T-cell (primary cell): ENCODE measurements at regions of chr12 and their contacts with region 1.

Region 1: DNA sequence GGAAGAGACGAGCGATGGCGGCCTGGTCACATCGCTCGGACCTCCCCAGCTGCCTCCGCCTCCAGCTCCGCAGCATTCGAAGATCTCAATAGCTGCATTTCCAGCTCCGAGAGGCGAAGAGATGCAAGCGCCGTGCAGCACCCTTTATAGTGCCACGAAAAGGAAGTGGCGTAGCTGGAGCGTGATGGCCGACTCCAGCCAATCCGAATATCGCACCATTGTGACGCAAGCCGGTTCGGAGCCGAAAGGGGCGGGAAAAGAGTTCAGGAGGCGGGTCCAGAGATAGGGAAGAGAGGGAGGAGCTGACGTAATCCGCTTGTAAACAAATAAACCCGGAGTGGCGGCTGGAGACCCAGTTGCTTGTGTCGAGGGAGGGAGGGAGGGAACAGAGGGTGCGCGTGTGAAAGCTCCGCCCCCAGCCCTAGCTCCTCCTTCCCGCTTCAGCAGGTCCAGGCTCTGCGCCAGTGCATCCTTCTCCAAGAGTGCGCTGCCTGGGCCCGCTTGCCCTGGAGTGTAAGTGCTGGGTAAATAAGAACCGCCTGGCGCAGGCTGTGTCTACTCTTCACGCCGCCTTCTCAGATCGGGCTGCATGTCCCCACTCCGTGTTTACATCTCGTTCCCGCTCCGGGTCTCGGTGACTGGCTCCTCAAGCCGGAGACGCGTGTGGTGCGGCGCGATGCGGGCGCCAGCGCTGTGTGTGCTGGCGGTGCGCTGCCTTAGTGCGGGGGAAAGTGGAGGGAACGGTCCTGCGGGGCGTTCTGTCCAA is at the start of gene BTG1:
- DNase-seq: peak; percentile 95 to 100 (median 99)
- ATAC-seq: peak; percentile 76 to 83 (median 80)
- H3K4me3 ChIP-seq: peak within 1 kb of the TSS; percentile 77 to 98
- H3K4me3 Mint-ChIP-seq: peak within 1 kb of the TSS; percentile 100
- H3K27ac ChIP-seq: peak within 1 kb of the TSS; percentile 94
- H3K27ac Mint-ChIP-seq: peak within 1 kb of the TSS; percentile 99 to 100
- H3K4me1 ChIP-seq: peaks cover 10% of the 10 kb centered on the region in 2 experiments
- H3K4me1 Mint-ChIP-seq: peaks cover 27 to 51% (median 32%) of the 10 kb centered on the region in 3 donors
- H3K27me3 ChIP-seq: no peaks in the 10 kb centered on the region
- H3K27me3 Mint-ChIP-seq: no peaks in the 10 kb centered on the region
- total RNA-seq, gene BTG1: 484 to 1,238 (median 551) TPM

Region 2: DNA sequence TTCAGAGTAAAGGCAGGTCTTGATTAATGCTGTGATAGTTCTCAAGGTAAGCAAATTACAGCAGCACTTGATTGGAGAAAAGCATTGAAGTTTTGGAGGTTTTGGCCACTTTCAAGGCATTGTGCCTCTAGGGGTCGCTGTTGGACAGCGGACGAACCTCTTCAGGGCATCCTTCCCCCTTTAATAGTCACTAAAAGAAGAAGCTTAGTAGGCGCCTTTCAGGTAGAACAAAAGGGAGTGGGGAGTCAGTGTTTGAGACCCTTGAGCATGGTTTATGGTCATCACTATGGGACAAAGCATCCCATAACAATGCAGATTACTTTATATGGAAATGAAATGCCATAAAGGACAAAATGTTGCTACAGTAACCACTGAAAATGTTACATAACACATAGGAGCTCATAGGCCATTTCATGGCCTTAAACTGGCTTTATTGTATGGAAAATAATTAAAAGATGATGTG is 763.8 kb before region 1 on chr12:
- CTCF ChIA-PET with region 1: interaction called, 4 to 20 read pairs
- POLR2A ChIA-PET with region 1: interaction called in 1 of 2 experiments, 13 read pairs
- DNase-seq: peak; percentile 61 to 92 (median 80)
- ATAC-seq: peak; percentile 84 to 89 (median 87)
- H3K4me3 ChIP-seq: peak overlapping the region in 1 of 2 donors; percentile 67
- H3K4me3 Mint-ChIP-seq: peak overlapping the region; percentile 62 to 76 (median 74)
- H3K27ac ChIP-seq: no peak overlapping the region
- H3K27ac Mint-ChIP-seq: peak overlapping the region; percentile 40 to 64
- H3K4me1 ChIP-seq: peaks cover 8% of the 10 kb centered on the region in 2 experiments
- H3K4me1 Mint-ChIP-seq: peaks cover 6 to 16% (median 7%) of the 10 kb centered on the region in 3 donors
- H3K27me3 ChIP-seq: peaks cover 0 to 4% of the 10 kb centered on the region in 2 experiments
- H3K27me3 Mint-ChIP-seq: peaks cover 7 to 9% of the 10 kb centered on the region in 2 donors

Region 3: DNA sequence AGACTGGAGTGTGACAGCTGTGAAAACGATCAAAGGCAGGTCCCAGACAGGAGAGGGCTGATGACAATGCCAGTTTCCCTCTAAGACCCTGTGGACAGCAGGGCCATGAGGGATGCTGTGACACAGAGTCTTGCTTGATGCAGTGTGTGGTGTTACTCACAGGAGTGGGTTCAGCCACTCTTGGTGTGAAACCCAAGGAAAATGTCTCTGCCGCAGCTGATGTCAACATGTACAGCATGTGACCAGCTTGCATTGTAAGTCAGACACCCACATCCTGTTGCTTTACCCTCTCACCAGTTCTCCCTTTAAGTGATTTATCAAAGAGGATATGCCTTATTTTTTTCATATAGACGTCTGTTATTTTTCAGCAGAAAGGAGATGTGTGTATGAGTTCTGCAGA is 268.9 kb before region 1 on chr12:
- CTCF ChIA-PET with region 1: interaction called in 1 of 2 experiments, 10 read pairs
- POLR2A ChIA-PET with region 1: interaction called, 14 to 101 read pairs
- DNase-seq: peak; percentile 60 to 97 (median 86)
- ATAC-seq: peak; percentile 91 to 98 (median 96)
- H3K4me3 ChIP-seq: peak overlapping the region in 1 of 2 donors; percentile 30
- H3K4me3 Mint-ChIP-seq: peak overlapping the region; percentile 69 to 84 (median 77)
- H3K27ac ChIP-seq: peak overlapping the region; percentile 97
- H3K27ac Mint-ChIP-seq: peak overlapping the region; percentile 97 to 100
- H3K4me1 ChIP-seq: peaks cover 42 to 47% of the 10 kb centered on the region in 2 experiments
- H3K4me1 Mint-ChIP-seq: peaks cover 71 to 84% (median 82%) of the 10 kb centered on the region in 3 donors
- H3K27me3 ChIP-seq: no peaks in the 10 kb centered on the region
- H3K27me3 Mint-ChIP-seq: no peaks in the 10 kb centered on the region

Region 4: DNA sequence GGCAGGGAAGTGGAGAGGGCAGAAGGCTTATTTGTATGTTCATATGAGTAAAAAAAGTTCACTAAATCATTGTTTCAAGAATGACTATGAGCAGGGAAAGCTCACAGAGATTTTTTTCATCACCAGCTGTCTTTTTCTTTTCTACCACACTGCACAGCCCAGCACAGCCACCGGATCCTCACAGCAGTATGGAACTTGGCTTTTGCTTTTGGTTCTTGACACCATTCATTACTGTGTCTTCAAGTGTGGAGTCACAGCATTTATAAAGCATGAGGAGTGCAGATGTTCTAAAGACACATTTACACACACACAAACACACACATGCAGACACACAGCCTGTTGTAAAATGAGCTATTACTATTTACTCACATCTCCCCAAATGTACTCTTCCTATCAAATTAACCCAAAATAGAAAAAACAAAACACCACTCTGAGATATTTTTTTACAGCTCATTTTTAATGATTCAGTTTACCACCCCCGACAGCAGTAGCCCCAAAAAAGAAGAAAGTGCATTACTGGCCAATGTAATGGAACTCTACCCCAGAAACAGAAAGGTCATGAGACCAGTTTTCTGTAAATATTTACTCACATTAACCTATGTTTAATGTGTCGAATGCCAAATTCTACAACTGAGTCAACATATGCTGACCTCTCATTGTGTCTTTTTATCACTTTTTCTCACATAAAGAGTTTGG is 60.7 kb before region 1 on chr12:
- CTCF ChIA-PET with region 1: no interaction called
- POLR2A ChIA-PET with region 1: interaction called, 5 to 19 read pairs
- DNase-seq: no peak
- ATAC-seq: peak in 3 of 4 experiments; percentile 33 to 39 (median 39)
- H3K4me3 ChIP-seq: no peak overlapping the region
- H3K4me3 Mint-ChIP-seq: no peak overlapping the region
- H3K27ac ChIP-seq: no peak overlapping the region
- H3K27ac Mint-ChIP-seq: peak overlapping the region in 1 of 2 donors; percentile 34
- H3K4me1 ChIP-seq: peaks cover 0 to 15% of the 10 kb centered on the region in 2 experiments
- H3K4me1 Mint-ChIP-seq: peaks cover 51 to 61% (median 51%) of the 10 kb centered on the region in 3 donors
- H3K27me3 ChIP-seq: no peaks in the 10 kb centered on the region
- H3K27me3 Mint-ChIP-seq: no peaks in the 10 kb centered on the region

Region 5: DNA sequence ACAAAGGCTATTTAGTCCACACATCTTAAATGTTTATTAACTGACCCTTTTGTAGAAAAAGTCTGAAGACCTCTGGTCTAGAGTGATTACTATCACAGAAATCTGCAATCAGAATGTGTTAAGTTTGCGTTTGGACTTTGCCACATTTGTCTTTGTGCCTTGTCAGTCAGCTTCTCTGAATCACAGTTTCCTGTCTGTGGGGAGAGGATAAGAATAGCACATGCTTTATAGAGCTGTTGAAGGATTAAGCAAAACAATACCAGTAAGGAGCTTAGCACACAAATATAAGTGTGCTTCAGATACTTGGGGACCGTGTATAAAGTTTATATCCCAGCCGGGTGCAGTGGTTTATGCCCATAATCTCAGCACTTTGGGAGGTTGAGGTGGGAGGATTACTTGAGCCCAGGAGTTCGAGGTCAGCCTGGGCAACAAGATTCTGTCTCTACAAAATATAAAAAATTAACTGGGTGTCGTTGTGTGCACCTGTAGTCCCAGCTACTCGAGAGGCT is 62.8 kb after region 1 on chr12:
- CTCF ChIA-PET with region 1: interaction called in 1 of 2 experiments, 4 read pairs
- POLR2A ChIA-PET with region 1: interaction called, 14 to 15 read pairs
- DNase-seq: peak in 14 of 35 experiments; percentile 3 to 70 (median 18)
- ATAC-seq: peak; percentile 81 to 88 (median 84)
- H3K4me3 ChIP-seq: peak overlapping the region in 1 of 2 donors; percentile 28
- H3K4me3 Mint-ChIP-seq: peak overlapping the region; percentile 67 to 78 (median 69)
- H3K27ac ChIP-seq: peak overlapping the region; percentile 69
- H3K27ac Mint-ChIP-seq: peak overlapping the region; percentile 94 to 98
- H3K4me1 ChIP-seq: peaks cover 16 to 27% of the 10 kb centered on the region in 2 experiments
- H3K4me1 Mint-ChIP-seq: peaks cover 36 to 47% (median 41%) of the 10 kb centered on the region in 3 donors
- H3K27me3 ChIP-seq: no peaks in the 10 kb centered on the region
- H3K27me3 Mint-ChIP-seq: no peaks in the 10 kb centered on the region

Region 6: GRCh38 chr12:92363295-92364146 is 217.6 kb after region 1 on chr12:
- CTCF ChIA-PET with region 1: interaction called in 1 of 2 experiments, 3 read pairs
- POLR2A ChIA-PET with region 1: interaction called, 15 to 19 read pairs
- DNase-seq: peak; percentile 5 to 67 (median 40)
- ATAC-seq: peak; percentile 68 to 73 (median 70)
- H3K4me3 ChIP-seq: peak overlapping the region; percentile 18 to 29
- H3K4me3 Mint-ChIP-seq: peak overlapping the region; percentile 65 to 78 (median 69)
- H3K27ac ChIP-seq: peak overlapping the region; percentile 76
- H3K27ac Mint-ChIP-seq: peak overlapping the region; percentile 96 to 98
- H3K4me1 ChIP-seq: peaks cover 25 to 36% of the 10 kb centered on the region in 2 experiments
- H3K4me1 Mint-ChIP-seq: peaks cover 67 to 74% (median 73%) of the 10 kb centered on the region in 3 donors
- H3K27me3 ChIP-seq: no peaks in the 10 kb centered on the region
- H3K27me3 Mint-ChIP-seq: no peaks in the 10 kb centered on the region

Region 7: DNA sequence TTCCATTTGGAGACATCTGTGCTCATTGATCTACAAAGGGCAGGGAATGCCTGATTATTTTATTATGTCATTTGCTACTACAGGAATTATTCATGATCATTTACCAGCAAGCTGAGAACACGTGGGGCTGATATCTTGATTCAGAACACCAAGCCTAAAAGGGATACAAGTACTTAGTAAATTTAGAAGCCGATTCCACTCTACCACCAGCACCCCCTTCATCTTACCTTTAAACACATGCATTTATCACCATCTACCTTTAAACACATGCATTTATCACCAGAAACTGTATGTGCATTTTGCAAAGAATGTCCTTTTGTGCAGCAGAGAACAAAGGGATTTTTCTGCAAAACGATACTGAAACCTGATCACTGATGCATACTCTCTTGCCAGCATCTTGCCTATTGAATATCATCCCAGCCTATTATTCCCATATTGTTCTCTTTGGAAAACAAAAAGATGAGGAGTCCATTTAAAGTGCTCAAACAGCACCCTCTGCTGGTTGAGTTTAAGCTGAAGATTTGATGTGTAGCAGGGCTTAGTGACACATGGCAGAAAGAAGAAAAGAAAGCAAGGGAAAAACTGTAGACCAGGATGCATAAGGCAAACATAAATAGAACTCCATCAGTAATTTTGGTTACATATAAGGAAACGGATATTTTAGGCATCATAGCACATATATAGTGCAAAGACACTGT is 424.3 kb after region 1 on chr12:
- CTCF ChIA-PET with region 1: interaction called in 1 of 2 experiments, 20 read pairs
- POLR2A ChIA-PET with region 1: interaction called, 5 to 13 read pairs
- DNase-seq: peak in 28 of 35 experiments; percentile 10 to 85 (median 34)
- ATAC-seq: peak; percentile 85 to 95 (median 92)
- H3K4me3 ChIP-seq: peak overlapping the region in 1 of 2 donors; percentile 2
- H3K4me3 Mint-ChIP-seq: no peak overlapping the region
- H3K27ac ChIP-seq: peak overlapping the region; percentile 25
- H3K27ac Mint-ChIP-seq: no peak overlapping the region
- H3K4me1 ChIP-seq: peaks cover 0 to 9% of the 10 kb centered on the region in 2 experiments
- H3K4me1 Mint-ChIP-seq: peaks cover 5 to 35% (median 26%) of the 10 kb centered on the region in 3 donors
- H3K27me3 ChIP-seq: no peaks in the 10 kb centered on the region
- H3K27me3 Mint-ChIP-seq: no peaks in the 10 kb centered on the region

Region 8: GRCh38 chr12:93229494-93230325 is 1083.8 kb after region 1 on chr12:
- CTCF ChIA-PET with region 1: no interaction called
- POLR2A ChIA-PET with region 1: no interaction called
- DNase-seq: no peak
- ATAC-seq: no peak
- H3K4me3 ChIP-seq: no peak overlapping the region
- H3K4me3 Mint-ChIP-seq: no peak overlapping the region
- H3K27ac ChIP-seq: no peak overlapping the region
- H3K27ac Mint-ChIP-seq: no peak overlapping the region
- H3K4me1 ChIP-seq: no peaks in the 10 kb centered on the region
- H3K4me1 Mint-ChIP-seq: no peaks in the 10 kb centered on the region
- H3K27me3 ChIP-seq: no peaks in the 10 kb centered on the region
- H3K27me3 Mint-ChIP-seq: no peaks in the 10 kb centered on the region